ENCODE measurements at regions of chr14 and their contacts with region 1.

Region 1: DNA sequence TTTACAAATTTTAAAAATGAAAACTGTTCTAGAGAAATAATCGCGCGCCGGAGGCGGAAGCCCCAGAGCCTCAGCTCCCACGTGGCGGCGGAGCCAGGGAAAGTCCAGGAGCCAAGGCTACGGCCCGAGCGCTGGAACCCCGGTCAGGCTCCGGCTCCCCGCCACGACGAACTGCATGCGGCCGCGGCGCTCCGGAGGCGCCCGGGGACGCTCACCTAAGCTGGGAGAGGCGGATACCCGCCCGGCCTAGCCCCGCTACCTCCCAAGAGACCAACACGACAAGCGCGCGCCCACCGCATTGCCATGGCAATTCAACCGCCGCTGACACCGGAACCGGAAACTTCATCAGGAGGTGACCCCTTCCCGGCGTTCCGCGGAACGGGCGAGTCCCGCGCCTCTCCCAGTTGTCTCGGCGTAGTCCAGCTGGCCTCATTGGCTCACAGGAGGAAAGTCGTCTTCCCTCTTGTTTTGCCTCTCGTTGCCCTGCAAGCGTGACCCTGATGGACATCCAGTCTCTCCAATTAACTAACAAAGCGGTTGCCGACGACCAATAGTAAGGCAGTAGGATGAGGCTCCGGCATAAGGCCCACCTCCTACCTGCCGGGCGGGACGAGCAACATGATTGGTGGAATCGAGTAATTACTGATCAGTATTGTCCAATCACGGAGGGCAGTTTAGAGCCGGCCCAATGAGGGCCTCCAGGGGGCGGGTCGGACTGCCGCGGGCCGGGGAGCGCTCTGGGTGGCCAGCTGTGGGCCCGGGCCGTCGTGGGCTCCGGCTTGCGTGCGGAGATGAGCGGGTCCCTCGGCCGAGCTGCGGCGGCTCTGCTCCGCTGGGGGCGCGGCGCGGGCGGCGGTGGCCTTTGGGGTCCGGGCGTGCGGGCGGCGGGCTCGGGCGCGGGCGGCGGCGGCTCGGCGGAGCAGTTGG is at the start of gene GLRX5:
- DNase-seq: peak; percentile 100
- H3K4me3 ChIP-seq: peak within 1 kb of the TSS; percentile 70 to 78 (median 71)
- H3K27ac ChIP-seq: peak within 1 kb of the TSS; percentile 49
- H3K4me1 ChIP-seq: peaks cover 52% of the 10 kb centered on the region
- H3K27me3 ChIP-seq: no peaks in the 10 kb centered on the region
- CTCF ChIP-seq: no peak
- POLR2A ChIP-seq: peak; percentile 65
- total RNA-seq, gene GLRX5: 50.9 and 52.0 TPM in 2 replicates

Region 2: GRCh38 chr14:94601884-94602391 is 932.6 kb before region 1 on chr14:
- CTCF ChIA-PET with region 1: no interaction called
- POLR2A ChIA-PET with region 1: no interaction called
- dilution Hi-C with region 1: no loop called
- intact Hi-C with region 1: loop called (anchors 5 kb)
- DNase-seq: peak; percentile 51
- H3K4me3 ChIP-seq: no peak overlapping the region
- H3K27ac ChIP-seq: peak overlapping the region; percentile 19
- H3K4me1 ChIP-seq: peaks cover 36% of the 10 kb centered on the region
- H3K27me3 ChIP-seq: no peaks in the 10 kb centered on the region
- CTCF ChIP-seq: no peak
- POLR2A ChIP-seq: no peak

Region 3: GRCh38 chr14:95460647-95461478 is 73.7 kb before region 1 on chr14:
- CTCF ChIA-PET with region 1: no interaction called
- POLR2A ChIA-PET with region 1: no interaction called
- dilution Hi-C with region 1: no loop called
- intact Hi-C with region 1: loop called (anchors 5 kb)
- DNase-seq: peak; percentile 52
- H3K4me3 ChIP-seq: no peak overlapping the region
- H3K27ac ChIP-seq: no peak overlapping the region
- H3K4me1 ChIP-seq: peaks cover 24% of the 10 kb centered on the region
- H3K27me3 ChIP-seq: no peaks in the 10 kb centered on the region
- CTCF ChIP-seq: no peak
- POLR2A ChIP-seq: no peak

Region 4: DNA sequence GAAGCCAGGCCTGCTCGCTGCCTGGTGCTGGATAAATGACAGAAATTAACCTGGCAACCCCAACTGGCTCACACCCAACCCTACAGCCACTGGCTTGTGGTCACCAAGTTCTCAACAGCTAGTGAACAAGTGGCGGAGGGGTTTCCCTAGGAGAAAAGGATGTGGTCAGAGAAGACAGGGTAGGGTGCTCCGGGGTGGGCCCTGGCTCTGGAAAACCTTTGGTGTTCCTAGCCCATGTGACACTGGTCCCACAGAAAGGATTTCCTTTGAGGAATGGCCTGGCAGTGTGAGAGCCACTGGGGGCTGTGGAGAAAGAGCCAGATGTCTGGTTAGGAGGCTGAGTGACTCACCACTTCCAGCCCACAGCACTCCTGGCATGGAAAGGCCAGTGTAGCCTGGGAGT is 26.9 kb before region 1 on chr14:
- CTCF ChIA-PET with region 1: interaction called, 79 read pairs
- POLR2A ChIA-PET with region 1: no interaction called
- dilution Hi-C with region 1: no loop called
- intact Hi-C with region 1: loop called (anchors 1 kb)
- DNase-seq: peak; percentile 83
- H3K4me3 ChIP-seq: no peak overlapping the region
- H3K27ac ChIP-seq: peak overlapping the region; percentile 88
- H3K4me1 ChIP-seq: peaks cover 28% of the 10 kb centered on the region
- H3K27me3 ChIP-seq: no peaks in the 10 kb centered on the region
- CTCF ChIP-seq: no peak
- POLR2A ChIP-seq: no peak

Region 5: DNA sequence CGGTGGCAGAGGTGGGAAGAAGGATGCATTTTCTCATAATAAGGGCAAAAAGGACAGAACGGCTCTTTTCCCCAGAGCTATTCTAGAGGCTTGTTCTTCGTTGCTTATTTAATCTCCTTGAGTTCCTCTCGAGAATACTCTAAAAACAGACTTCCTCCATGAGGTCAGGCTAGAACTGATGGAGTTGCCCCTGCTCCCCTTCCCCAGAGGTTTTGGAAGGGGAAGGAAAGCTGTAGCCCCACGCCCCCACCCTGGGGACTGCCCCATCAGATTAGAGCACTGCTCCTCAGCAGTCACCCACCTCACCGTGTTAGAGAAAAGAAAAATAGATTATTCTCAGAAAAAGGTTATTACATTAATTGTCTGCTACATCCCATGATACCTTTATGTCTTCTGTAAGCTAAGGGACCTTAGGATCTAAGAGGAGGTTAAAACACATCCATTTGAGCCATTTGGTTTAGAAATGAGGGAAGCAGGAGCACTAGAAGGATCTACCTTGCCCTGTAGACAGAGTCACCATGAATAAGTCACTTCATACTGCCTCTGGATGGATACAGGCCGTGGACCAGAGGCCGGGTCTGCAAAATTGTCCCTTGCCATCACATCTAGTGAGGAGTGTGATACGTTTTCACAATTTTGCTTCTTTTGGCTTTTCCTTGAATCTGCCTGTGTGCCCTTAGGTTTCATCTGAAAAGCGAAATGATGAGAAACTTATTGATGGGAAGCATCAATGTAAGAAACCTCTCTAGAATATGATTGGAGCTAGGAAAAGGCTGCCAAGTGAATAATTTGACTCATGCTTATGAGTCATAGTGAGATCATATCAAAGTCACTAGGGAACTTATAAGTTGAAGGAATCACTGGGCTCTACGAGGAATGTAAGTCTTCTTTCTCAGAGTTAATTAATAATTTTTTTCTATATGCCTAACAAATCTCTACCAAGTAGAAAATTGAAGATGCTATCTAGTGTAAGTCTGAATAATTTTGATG is 10.9 kb after region 1 on chr14:
- CTCF ChIA-PET with region 1: interaction called, 5 read pairs
- POLR2A ChIA-PET with region 1: interaction called, 6 read pairs
- dilution Hi-C with region 1: no loop called
- intact Hi-C with region 1: loop called (anchors 1 kb)
- DNase-seq: peak; percentile 82
- H3K4me3 ChIP-seq: peak overlapping the region in 1 of 3 experiments; percentile 16
- H3K27ac ChIP-seq: peak overlapping the region; percentile 72
- H3K4me1 ChIP-seq: peaks cover 40% of the 10 kb centered on the region
- H3K27me3 ChIP-seq: no peaks in the 10 kb centered on the region
- CTCF ChIP-seq: no peak
- POLR2A ChIP-seq: no peak

Region 6: DNA sequence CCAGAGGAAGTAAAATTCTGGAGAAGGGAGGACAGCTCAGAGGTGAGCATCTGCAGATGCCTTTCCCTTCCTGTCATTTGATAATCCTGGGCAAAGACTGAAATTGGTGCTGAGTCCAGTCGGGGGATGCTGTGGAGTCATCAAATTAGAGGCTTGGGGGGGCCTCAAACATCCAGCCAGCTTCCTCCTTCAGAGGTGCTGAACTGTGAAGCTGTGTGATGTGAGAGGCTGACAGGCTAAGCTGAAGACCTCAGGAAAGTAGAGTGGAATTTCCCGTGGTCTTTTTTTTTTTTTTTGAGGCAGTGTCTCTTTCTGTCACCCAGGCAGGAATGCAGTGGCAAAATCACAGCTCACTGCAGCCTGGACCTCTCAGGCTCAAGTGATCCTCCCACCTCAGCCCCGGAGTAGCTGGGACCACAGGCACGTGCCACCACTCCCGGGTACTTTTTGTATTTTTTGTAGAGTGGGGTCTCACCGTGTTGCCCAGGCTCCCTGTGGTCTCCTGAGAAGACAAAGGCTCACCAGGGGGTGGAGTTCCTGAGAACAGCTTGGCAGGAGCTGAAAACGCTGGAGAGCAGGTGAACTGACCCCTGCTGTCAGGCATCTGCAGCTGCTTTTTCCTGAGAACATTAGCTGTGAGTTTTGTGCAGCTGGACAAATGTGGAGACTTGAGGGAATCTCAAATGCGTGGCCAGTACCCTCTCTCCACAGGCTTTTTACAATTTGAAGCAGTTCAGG is 145.6 kb after region 1 on chr14:
- CTCF ChIA-PET with region 1: no interaction called
- POLR2A ChIA-PET with region 1: no interaction called
- dilution Hi-C with region 1: no loop called
- intact Hi-C with region 1: no loop called
- DNase-seq: no peak
- H3K4me3 ChIP-seq: no peak overlapping the region
- H3K27ac ChIP-seq: no peak overlapping the region
- H3K4me1 ChIP-seq: no peaks in the 10 kb centered on the region
- H3K27me3 ChIP-seq: no peaks in the 10 kb centered on the region
- CTCF ChIP-seq: no peak
- POLR2A ChIP-seq: no peak

Region 7: DNA sequence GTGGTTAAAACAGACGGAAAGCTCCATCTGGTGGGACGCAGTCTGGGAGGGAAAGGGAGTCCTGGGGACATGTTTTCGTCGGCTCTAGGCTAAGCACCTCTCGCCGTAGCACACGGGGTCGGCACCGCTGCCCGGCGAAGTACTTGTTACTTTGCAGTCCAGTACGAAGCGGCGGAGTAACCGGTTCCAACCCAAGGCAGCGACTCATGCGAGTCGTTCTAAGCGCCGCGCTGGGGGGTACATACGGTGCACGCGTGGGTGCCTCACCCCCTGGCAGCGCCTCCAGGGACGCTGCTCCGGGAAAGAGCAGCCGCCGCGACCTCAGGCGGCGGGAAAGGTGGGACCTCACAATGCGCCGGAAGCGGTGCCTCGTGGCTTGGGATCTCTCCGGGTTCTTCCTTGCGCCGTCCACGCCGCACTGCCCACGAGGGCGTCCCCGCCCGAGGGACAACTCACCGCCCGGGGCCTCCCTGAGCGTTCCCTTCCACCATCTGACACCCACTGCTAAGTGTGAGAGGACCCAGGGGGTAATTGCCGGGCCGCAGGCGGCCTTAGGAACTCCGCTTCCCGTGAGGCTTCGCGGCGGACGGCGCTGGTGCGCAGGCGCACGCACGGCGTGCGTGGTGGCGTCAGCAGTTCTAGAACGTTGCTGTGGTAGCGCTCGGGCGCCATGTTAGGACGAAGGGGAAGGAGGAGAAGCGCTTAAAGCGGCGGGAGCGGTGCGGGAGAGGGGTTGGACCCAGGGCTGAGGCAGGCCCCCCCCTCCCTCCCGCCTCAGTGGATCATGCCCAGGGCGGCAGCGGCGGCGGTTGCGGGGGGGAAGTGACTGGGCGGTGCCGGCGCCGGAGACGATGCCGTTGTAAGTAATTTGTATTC is 967.4 kb after region 1 on chr14 and contains the start of gene PAPOLA:
- CTCF ChIA-PET with region 1: no interaction called
- POLR2A ChIA-PET with region 1: no interaction called
- dilution Hi-C with region 1: no loop called
- intact Hi-C with region 1: loop called (anchors 10 kb)
- DNase-seq: peak; percentile 97
- H3K4me3 ChIP-seq: peak within 1 kb of the TSS; percentile 49 to 82 (median 81)
- H3K27ac ChIP-seq: peak within 1 kb of the TSS; percentile 73
- H3K4me1 ChIP-seq: peaks cover 29% of the 10 kb centered on the region
- H3K27me3 ChIP-seq: no peaks in the 10 kb centered on the region
- CTCF ChIP-seq: peak in 1 of 2 donors; percentile 35
- POLR2A ChIP-seq: peak; percentile 75
- total RNA-seq, gene PAPOLA: 164 and 184 TPM in 2 replicates